ENCODE measurements at regions of chr5 and their contacts with region 1.

Region 1: DNA sequence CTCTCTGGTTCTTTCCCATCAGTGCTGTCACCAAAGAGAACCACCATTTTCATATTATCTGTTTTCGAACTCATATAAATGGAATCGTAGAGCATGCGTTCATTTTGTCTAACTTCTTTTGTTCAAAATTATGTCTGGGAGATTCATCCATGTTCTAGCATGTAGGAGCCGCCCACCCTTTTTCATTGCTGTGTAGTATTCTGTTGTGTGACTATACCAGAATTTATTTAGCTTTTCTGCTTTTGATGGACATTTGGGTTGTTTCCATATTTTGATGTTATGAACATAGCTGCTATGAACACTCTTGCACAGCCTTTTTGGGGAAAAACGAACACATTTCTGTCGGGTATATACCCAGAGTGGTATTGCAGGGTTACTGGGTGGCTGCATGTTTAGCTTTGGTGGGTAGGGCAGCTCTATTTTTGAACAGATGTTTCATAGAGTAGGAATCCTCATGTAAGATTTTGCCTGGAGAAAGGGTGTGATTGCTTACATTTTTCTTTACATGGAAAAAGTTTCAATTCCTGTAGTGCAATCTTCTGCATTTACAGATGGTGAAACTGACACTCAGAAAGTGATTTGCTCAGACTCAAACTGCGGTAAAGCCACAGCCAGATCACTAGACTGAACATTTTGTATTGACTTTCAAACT is 100.2 kb upstream of the IL12B start:
- DNase-seq: no peak
- H3K4me3 ChIP-seq: no peak overlapping the region
- H3K27ac ChIP-seq: no peak overlapping the region
- H3K4me1 ChIP-seq: no peaks in the 10 kb centered on the region
- H3K27me3 ChIP-seq: no peaks in the 10 kb centered on the region
- CTCF ChIP-seq: no peak
- EP300 ChIP-seq: no peak
- POLR2A ChIP-seq: no peak

Region 2: DNA sequence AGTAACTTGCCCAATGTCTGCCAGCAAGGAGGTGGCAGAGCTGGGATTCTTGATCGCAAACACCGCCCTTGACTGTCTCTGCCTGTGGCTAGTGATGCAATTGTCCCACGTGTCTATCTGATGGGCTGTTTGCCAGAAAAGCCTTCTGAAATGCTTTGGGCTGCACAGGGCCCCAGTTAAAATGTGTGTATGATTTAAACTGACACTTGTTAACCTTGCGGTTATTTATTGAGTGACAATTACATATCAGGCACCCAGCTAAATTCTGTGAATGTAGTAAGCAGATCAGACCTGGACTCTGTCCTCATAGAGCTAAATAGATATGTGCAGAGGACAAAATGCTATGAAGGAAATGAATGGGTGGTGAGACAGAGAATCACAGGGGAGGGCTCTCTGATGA is 88.6 kb before region 1 on chr5:
- in situ Hi-C with region 1: no loop called
- intact Hi-C with region 1: no loop called
- DNase-seq: peak; percentile 42
- H3K4me3 ChIP-seq: no peak overlapping the region
- H3K27ac ChIP-seq: no peak overlapping the region
- H3K4me1 ChIP-seq: no peaks in the 10 kb centered on the region
- H3K27me3 ChIP-seq: no peaks in the 10 kb centered on the region
- CTCF ChIP-seq: no peak
- EP300 ChIP-seq: no peak
- POLR2A ChIP-seq: no peak

Region 3: GRCh38 chr5:159465604-159466003 is 35.1 kb after region 1 on chr5:
- in situ Hi-C with region 1: no loop called
- intact Hi-C with region 1: loop called (anchors 1 kb)
- DNase-seq: no peak
- H3K4me3 ChIP-seq: no peak overlapping the region
- H3K27ac ChIP-seq: no peak overlapping the region
- H3K4me1 ChIP-seq: peaks cover 0 to 3% (median 0%) of the 10 kb centered on the region in 4 donors
- H3K27me3 ChIP-seq: no peaks in the 10 kb centered on the region
- CTCF ChIP-seq: no peak
- EP300 ChIP-seq: no peak
- POLR2A ChIP-seq: no peak